ENCODE measurements at regions of chr12 and their contacts with region 1.

Region 1: GRCh38 chr12:29317556-29318363 is 63.2 kb downstream of the ERGIC2 start:
- DNase-seq: peak; percentile 55 to 68 (median 63)
- H3K4me3 ChIP-seq: no peak overlapping the region
- H3K4me3 Mint-ChIP-seq: peak overlapping the region in 1 of 8 donors; percentile 35
- H3K27ac ChIP-seq: no peak overlapping the region
- H3K27ac Mint-ChIP-seq: peak overlapping the region in 5 of 7 donors; percentile 0 to 72 (median 48)
- H3K4me1 ChIP-seq: peaks cover 4% of the 10 kb centered on the region
- H3K4me1 Mint-ChIP-seq: peaks cover 8 to 12% (median 10%) of the 10 kb centered on the region in 4 donors
- H3K27me3 ChIP-seq: no peaks in the 10 kb centered on the region
- H3K27me3 Mint-ChIP-seq: no peaks in the 10 kb centered on the region

Region 2: DNA sequence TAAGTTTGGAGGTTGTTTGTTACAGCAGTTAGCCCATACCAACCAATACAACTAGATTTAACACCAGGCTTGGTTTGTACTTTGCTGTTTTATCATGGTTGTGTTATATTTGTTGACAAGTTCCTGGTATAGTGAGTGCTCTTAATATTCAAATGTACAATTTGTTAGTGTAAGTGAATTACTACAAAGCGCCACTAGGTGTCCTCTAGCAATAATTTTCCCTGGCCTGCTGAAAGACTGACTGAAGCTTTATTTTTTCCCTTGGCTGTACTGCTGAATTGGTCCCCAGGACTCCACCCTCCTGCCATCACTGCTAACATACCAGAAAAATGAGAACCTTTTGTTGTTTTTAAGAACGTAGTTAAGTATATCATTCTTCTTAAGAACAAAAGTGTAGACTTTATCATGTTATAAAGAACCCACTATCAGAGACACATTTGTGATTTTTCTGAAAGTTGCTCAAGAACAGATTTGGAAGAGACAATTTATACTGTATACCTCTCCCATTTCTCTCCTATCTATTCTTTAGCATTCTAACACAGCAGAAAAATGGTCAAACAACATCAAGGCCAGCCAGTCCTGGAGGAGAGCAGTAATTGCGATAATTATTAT is 244.0 kb before region 1 on chr12:
- CTCF ChIA-PET with region 1: interaction called, 137 read pairs
- POLR2A ChIA-PET with region 1: interaction called, 4 read pairs
- intact Hi-C with region 1: loop called (anchors 1 kb)
- DNase-seq: peak; percentile 32 to 49 (median 37)
- H3K4me3 ChIP-seq: no peak overlapping the region
- H3K4me3 Mint-ChIP-seq: no peak overlapping the region
- H3K27ac ChIP-seq: no peak overlapping the region
- H3K27ac Mint-ChIP-seq: no peak overlapping the region
- H3K4me1 ChIP-seq: no peaks in the 10 kb centered on the region
- H3K4me1 Mint-ChIP-seq: peaks cover 0 to 2% (median 0%) of the 10 kb centered on the region in 4 donors
- H3K27me3 ChIP-seq: no peaks in the 10 kb centered on the region
- H3K27me3 Mint-ChIP-seq: peaks cover 13 to 18% of the 10 kb centered on the region in 2 donors

Region 3: DNA sequence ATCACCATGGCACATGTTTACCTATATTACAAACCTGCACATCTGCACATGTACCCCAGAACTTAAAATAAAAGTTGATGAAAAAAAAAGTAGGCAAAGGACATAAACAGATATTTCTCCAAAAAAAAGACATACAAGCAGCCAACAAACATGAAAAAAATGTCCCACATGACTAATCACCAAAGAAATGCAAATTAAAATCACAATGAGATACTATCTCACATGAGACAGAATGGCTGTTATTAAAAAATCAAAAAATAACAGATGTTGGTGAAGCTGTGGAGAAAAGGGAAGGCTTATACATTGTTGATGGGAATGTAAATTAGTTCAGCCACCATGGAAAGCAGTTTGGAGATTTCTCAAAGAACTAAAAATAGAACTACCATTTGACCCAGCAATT is 236.7 kb before region 1 on chr12:
- CTCF ChIA-PET with region 1: interaction called, 137 read pairs
- POLR2A ChIA-PET with region 1: no interaction called
- intact Hi-C with region 1: no loop called
- DNase-seq: no peak
- H3K4me3 ChIP-seq: no peak overlapping the region
- H3K4me3 Mint-ChIP-seq: no peak overlapping the region
- H3K27ac ChIP-seq: no peak overlapping the region
- H3K27ac Mint-ChIP-seq: no peak overlapping the region
- H3K4me1 ChIP-seq: no peaks in the 10 kb centered on the region
- H3K4me1 Mint-ChIP-seq: no peaks in the 10 kb centered on the region
- H3K27me3 ChIP-seq: no peaks in the 10 kb centered on the region
- H3K27me3 Mint-ChIP-seq: peaks cover 2 to 3% of the 10 kb centered on the region in 2 donors

Region 4: GRCh38 chr12:29088611-29089219 is 229.0 kb before region 1 on chr12:
- CTCF ChIA-PET with region 1: interaction called, 120 read pairs
- POLR2A ChIA-PET with region 1: interaction called, 3 read pairs
- intact Hi-C with region 1: loop called (anchors 1 kb)
- DNase-seq: peak in 4 of 5 donors; percentile 22 to 33 (median 31)
- H3K4me3 ChIP-seq: no peak overlapping the region
- H3K4me3 Mint-ChIP-seq: no peak overlapping the region
- H3K27ac ChIP-seq: no peak overlapping the region
- H3K27ac Mint-ChIP-seq: no peak overlapping the region
- H3K4me1 ChIP-seq: no peaks in the 10 kb centered on the region
- H3K4me1 Mint-ChIP-seq: peaks cover 0 to 5% (median 3%) of the 10 kb centered on the region in 4 donors
- H3K27me3 ChIP-seq: no peaks in the 10 kb centered on the region
- H3K27me3 Mint-ChIP-seq: peaks cover 0 to 3% of the 10 kb centered on the region in 2 donors

Region 5: GRCh38 chr12:29148911-29149690 is 168.7 kb before region 1 on chr12 and contains the start of gene FAR2:
- CTCF ChIA-PET with region 1: no interaction called
- POLR2A ChIA-PET with region 1: no interaction called
- intact Hi-C with region 1: loop called (anchors 5 kb)
- DNase-seq: peak; percentile 43 to 57 (median 55)
- H3K4me3 ChIP-seq: peak within 1 kb of the TSS; percentile 74 to 92
- H3K4me3 Mint-ChIP-seq: peak within 1 kb of the TSS; percentile 94 to 99 (median 97)
- H3K27ac ChIP-seq: peak within 1 kb of the TSS; percentile 46
- H3K27ac Mint-ChIP-seq: peak within 1 kb of the TSS; percentile 85 to 97 (median 94)
- H3K4me1 ChIP-seq: peaks cover 23% of the 10 kb centered on the region
- H3K4me1 Mint-ChIP-seq: peaks cover 23 to 49% (median 37%) of the 10 kb centered on the region in 4 donors
- H3K27me3 ChIP-seq: no peaks in the 10 kb centered on the region
- H3K27me3 Mint-ChIP-seq: no peaks in the 10 kb centered on the region
- total RNA-seq, gene FAR2: 6.2 to 10.1 TPM

Region 6: DNA sequence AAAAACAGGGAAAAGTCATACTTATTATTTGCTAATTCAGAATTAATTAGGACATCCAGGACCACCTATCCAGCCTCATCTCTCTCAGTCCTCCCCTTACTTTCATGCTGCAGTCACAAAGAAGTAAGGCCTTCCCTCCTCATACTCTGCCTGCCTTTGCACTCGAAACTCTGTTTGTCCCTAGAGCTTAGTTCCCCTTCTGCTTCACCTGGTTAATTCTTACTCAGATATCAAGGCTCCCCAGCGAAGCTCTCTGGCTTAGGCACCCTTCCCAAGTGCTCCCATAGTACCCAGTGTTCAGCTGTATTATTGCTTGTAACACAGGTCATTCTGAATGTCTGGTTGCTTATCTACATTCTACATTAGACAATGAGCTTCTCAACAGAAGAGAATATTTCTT is 18.1 kb before region 1 on chr12:
- CTCF ChIA-PET with region 1: interaction called, 10 read pairs
- POLR2A ChIA-PET with region 1: no interaction called
- intact Hi-C with region 1: no loop called
- DNase-seq: no peak
- H3K4me3 ChIP-seq: no peak overlapping the region
- H3K4me3 Mint-ChIP-seq: no peak overlapping the region
- H3K27ac ChIP-seq: no peak overlapping the region
- H3K27ac Mint-ChIP-seq: peak overlapping the region in 1 of 7 donors; percentile 42
- H3K4me1 ChIP-seq: no peaks in the 10 kb centered on the region
- H3K4me1 Mint-ChIP-seq: no peaks in the 10 kb centered on the region
- H3K27me3 ChIP-seq: no peaks in the 10 kb centered on the region
- H3K27me3 Mint-ChIP-seq: no peaks in the 10 kb centered on the region

Region 7: GRCh38 chr12:29350080-29350479 is 32.3 kb after region 1 on chr12:
- CTCF ChIA-PET with region 1: no interaction called
- POLR2A ChIA-PET with region 1: no interaction called
- intact Hi-C with region 1: no loop called
- DNase-seq: no peak
- H3K4me3 ChIP-seq: no peak overlapping the region
- H3K4me3 Mint-ChIP-seq: no peak overlapping the region
- H3K27ac ChIP-seq: no peak overlapping the region
- H3K27ac Mint-ChIP-seq: peak overlapping the region in 2 of 7 donors; percentile 4 to 27
- H3K4me1 ChIP-seq: no peaks in the 10 kb centered on the region
- H3K4me1 Mint-ChIP-seq: peaks cover 0 to 1% (median 0%) of the 10 kb centered on the region in 4 donors
- H3K27me3 ChIP-seq: no peaks in the 10 kb centered on the region
- H3K27me3 Mint-ChIP-seq: no peaks in the 10 kb centered on the region

Region 8: GRCh38 chr12:29544428-29545101 is 226.8 kb after region 1 on chr12:
- CTCF ChIA-PET with region 1: no interaction called
- POLR2A ChIA-PET with region 1: no interaction called
- intact Hi-C with region 1: no loop called
- DNase-seq: no peak
- H3K4me3 ChIP-seq: no peak overlapping the region
- H3K4me3 Mint-ChIP-seq: no peak overlapping the region
- H3K27ac ChIP-seq: no peak overlapping the region
- H3K27ac Mint-ChIP-seq: no peak overlapping the region
- H3K4me1 ChIP-seq: no peaks in the 10 kb centered on the region
- H3K4me1 Mint-ChIP-seq: no peaks in the 10 kb centered on the region
- H3K27me3 ChIP-seq: no peaks in the 10 kb centered on the region
- H3K27me3 Mint-ChIP-seq: peaks cover 9 to 11% of the 10 kb centered on the region in 2 donors